Keratinocyte (primary cell): ENCODE measurements at regions of chr9 and their contacts with region 1.

Region 1: GRCh38 chr9:121529237-121529987 is 29.8 kb upstream of the GGTA1 start:
- DNase-seq: peak; percentile 15
- H3K4me3 ChIP-seq: no peak overlapping the region
- H3K27ac ChIP-seq: no peak overlapping the region
- H3K4me1 ChIP-seq: peaks cover 8% of the 10 kb centered on the region
- H3K27me3 ChIP-seq: no peaks in the 10 kb centered on the region
- CTCF ChIP-seq: no peak

Region 2: DNA sequence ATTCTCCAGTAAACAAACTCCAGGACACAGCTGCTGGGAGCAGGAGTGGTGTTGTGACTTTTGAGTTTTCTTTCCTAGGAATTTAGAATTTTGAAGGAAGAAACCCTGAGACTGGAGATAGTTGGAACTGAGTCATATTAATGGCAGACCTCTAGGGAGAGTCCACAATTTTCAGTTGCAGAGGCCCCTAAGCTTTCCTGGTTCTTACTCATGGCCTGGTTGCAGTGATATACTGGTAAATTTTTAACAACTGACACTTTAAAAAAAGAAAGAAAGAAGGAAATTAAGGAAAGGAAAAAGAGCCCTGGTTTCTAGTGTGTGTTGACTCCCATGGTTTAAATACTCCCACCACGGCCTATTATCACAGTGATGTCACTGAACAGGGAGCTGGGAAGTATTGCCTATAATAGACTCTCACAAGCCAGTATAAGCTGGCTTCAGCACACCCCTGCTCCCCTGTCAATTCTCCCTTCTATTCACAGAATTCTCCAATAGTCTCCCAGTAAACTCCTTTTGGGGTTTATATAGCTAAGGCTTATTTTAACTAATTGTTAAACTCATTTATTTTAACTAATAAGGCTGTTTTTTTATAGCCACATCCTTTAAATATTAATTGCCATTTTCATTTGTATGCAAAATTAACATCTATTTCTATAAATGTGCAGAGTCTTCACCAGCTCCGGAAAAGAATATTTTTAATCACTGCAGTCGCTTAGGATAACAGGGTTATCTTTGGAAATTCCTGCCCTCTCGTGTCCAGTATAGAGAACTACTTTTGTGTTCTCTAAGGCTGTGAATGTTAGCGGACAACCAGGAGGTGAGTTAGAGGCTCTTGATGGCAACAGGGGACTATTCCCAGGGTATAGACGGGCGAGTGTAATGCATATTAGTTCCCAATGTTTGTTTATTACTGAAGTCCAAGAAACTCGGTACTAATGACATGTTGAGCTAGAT is 89.4 kb before region 1 on chr9:
- dilution Hi-C with region 1: loop called (anchors 10 kb)
- DNase-seq: no peak
- H3K4me3 ChIP-seq: no peak overlapping the region
- H3K27ac ChIP-seq: no peak overlapping the region
- H3K4me1 ChIP-seq: no peaks in the 10 kb centered on the region
- H3K27me3 ChIP-seq: peaks cover 26% of the 10 kb centered on the region
- CTCF ChIP-seq: no peak